CD4-positive, alpha-beta T cell (primary cell): ENCODE measurements at regions of chr11 and their contacts with region 1.

Region 1: DNA sequence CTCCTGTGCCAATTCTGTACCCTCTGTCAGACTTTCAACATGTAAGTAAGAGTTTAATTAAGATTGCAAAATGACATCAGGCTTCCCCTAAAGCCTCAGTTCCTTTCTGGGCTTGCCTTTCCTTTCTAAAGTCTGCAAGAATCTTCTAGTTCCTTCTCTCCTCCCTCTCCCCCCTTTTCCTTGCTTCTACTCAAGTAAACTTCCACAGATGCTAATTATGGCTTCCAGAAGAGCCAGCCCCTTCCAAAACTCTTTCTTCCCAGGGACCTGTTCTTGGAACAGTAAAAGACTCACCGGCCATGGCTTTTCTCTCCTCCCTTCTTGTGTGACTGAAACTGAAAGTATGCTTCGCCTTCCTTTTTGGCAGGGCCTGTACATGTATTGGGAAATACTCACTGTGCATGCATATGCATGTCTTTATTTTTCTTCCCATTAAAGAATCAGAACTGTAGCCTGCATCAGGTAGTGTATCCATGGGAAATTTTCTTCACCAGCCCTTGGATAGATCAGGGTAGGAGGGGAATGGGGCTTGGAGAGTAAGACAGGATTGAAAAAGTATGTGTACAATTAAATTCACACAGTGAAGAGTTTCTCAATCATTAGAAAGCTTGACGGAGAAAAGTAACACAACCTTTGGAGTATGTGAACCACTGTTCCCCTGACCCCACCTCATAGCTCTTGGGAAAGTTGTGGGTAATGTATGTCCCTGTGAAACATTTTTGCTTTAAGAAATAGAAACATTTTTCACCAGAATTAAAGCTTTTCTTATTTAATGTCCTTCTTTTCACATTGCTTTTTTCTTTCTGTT is at the start of gene CASP1:
- DNase-seq: peak in 8 of 14 experiments; percentile 12 to 70 (median 32)
- ATAC-seq: peak; percentile 77
- H3K4me3 ChIP-seq: peak within 1 kb of the TSS; percentile 66
- H3K4me3 Mint-ChIP-seq: peak within 1 kb of the TSS; percentile 94
- H3K27ac ChIP-seq: peak within 1 kb of the TSS; percentile 26 to 76
- H3K27ac Mint-ChIP-seq: peak within 1 kb of the TSS; percentile 88
- H3K4me1 ChIP-seq: peaks cover 16% of the 10 kb centered on the region
- H3K4me1 Mint-ChIP-seq: peaks cover 50% of the 10 kb centered on the region
- H3K27me3 ChIP-seq: no peaks in the 10 kb centered on the region
- H3K27me3 Mint-ChIP-seq: no peaks in the 10 kb centered on the region
- CTCF ChIP-seq: no peak
- total RNA-seq, gene CASP1: 15.6 to 17.6 TPM

Region 2: DNA sequence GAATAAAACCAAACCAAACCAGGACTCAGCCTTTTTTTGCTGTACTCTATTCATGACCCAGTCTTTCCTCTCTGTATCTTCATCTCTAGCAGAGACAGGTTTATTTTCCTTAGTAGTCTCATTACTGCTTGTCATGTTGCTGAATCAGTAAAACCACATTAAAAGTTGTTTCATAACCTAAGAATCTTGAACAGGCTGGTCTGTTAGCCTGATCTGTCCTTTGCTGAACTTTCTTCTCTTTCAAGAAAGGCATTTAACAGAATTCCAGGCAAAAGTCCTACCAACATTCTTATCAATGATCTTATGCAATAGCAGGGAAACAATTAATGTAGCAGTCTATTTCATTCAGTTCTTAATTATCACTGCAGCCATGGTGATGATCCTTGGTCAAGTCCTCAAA is 334.4 kb before region 1 on chr11:
- CTCF ChIA-PET with region 1: no interaction called
- POLR2A ChIA-PET with region 1: interaction called, 4 read pairs
- intact Hi-C with region 1: loop called in 1 of 2 experiments (anchors 5 kb)
- DNase-seq: peak in 3 of 14 experiments; percentile 26 to 55 (median 29)
- ATAC-seq: peak; percentile 56
- H3K4me3 ChIP-seq: no peak overlapping the region
- H3K4me3 Mint-ChIP-seq: peak overlapping the region; percentile 36
- H3K27ac ChIP-seq: no peak overlapping the region
- H3K27ac Mint-ChIP-seq: peak overlapping the region; percentile 68
- H3K4me1 ChIP-seq: peaks cover 19% of the 10 kb centered on the region
- H3K4me1 Mint-ChIP-seq: peaks cover 43% of the 10 kb centered on the region
- H3K27me3 ChIP-seq: no peaks in the 10 kb centered on the region
- H3K27me3 Mint-ChIP-seq: no peaks in the 10 kb centered on the region
- CTCF ChIP-seq: no peak

Region 3: DNA sequence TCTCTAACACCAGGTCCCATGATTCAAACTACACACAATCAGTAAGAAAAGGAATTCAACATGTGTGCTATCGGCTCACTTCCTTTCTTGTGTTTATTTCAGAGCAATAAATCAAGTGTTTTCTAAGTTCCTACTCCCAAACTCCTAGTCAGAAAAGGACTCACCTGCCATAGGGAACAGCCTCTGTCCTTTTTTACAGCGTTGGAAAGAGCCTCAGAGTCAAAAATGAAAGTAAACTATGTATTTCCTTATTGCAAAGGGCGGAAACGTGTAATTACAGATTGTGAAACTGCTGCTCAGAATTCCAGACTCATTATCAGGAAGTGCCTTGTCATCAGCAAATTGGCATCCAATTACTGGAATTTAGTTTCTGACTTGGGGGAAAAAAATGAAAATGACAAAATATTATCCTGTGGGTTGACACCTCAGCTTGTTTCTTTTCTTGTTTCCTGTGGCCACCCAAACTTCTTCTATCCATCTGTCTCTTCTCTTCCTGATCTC is 66.6 kb before region 1 on chr11 and contains the start of gene CASP4:
- CTCF ChIA-PET with region 1: no interaction called
- POLR2A ChIA-PET with region 1: interaction called, 7 read pairs
- intact Hi-C with region 1: loop called (anchors 5 to 10 kb)
- DNase-seq: peak in 4 of 14 experiments; percentile 8 to 81 (median 70)
- ATAC-seq: peak; percentile 83
- H3K4me3 ChIP-seq: peak within 1 kb of the TSS; percentile 72
- H3K4me3 Mint-ChIP-seq: peak within 1 kb of the TSS; percentile 97
- H3K27ac ChIP-seq: peak within 1 kb of the TSS; percentile 57 to 79
- H3K27ac Mint-ChIP-seq: peak within 1 kb of the TSS; percentile 94
- H3K4me1 ChIP-seq: peaks cover 21% of the 10 kb centered on the region
- H3K4me1 Mint-ChIP-seq: peaks cover 41% of the 10 kb centered on the region
- H3K27me3 ChIP-seq: no peaks in the 10 kb centered on the region
- H3K27me3 Mint-ChIP-seq: no peaks in the 10 kb centered on the region
- CTCF ChIP-seq: no peak
- total RNA-seq, gene CASP4: 54.3 to 56.3 TPM

Region 4: GRCh38 chr11:105000797-105001196 is 34.2 kb before region 1 on chr11:
- CTCF ChIA-PET with region 1: no interaction called
- POLR2A ChIA-PET with region 1: no interaction called
- intact Hi-C with region 1: no loop called
- DNase-seq: peak; percentile 17 to 73 (median 40)
- ATAC-seq: peak; percentile 82
- H3K4me3 ChIP-seq: no peak overlapping the region
- H3K4me3 Mint-ChIP-seq: no peak overlapping the region
- H3K27ac ChIP-seq: no peak overlapping the region
- H3K27ac Mint-ChIP-seq: no peak overlapping the region
- H3K4me1 ChIP-seq: no peaks in the 10 kb centered on the region
- H3K4me1 Mint-ChIP-seq: peaks cover 6% of the 10 kb centered on the region
- H3K27me3 ChIP-seq: no peaks in the 10 kb centered on the region
- H3K27me3 Mint-ChIP-seq: no peaks in the 10 kb centered on the region
- CTCF ChIP-seq: peak; percentile 72